Left colon (tissue), 2 donors: ENCODE measurements at regions of chr19 and their contacts with region 1.

Region 1: DNA sequence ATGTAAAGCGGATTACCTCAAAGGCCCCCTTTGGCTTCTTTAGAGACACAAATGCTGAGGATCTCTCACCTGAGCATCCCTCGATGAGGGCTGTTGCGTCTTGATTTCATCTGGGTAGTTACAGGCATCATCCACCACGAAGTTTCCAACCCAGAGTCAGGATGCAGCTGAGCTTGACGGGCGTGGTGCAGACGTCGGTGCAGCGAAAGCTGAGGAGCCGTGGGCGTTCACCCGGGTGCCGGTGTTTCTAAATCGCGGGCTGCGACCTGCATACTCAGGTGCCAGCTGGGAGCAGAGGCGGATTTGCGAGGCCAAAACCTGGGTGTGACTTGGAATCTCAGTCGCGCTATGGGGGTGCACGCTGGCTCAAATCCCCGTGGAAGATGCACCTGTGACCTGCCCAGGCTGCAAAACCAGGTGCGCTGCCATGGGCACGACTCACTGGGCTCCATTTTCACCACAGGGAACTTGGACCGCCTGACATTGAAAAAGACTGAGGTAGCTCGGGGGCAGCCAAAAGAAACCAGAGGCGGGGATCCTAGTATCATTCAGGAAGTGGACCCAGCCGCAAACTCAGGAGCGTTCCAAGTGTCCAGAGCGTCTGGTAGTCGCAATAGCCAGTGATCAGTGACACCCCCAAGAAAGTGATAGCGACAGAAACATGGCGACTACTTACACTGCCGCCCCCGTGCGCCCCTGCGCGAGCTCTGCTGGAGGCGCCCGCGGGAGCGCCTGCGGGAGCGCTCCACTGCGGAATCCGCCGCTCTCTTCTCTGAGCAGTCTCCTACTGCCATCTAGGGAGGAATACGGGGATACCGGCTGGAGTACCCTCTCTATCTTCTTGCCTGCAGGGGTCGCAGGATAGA is 36.4 kb upstream of the IGFL4 start:
- DNase-seq: peak; percentile 38 to 62
- ATAC-seq: peak; percentile 98

Region 2: DNA sequence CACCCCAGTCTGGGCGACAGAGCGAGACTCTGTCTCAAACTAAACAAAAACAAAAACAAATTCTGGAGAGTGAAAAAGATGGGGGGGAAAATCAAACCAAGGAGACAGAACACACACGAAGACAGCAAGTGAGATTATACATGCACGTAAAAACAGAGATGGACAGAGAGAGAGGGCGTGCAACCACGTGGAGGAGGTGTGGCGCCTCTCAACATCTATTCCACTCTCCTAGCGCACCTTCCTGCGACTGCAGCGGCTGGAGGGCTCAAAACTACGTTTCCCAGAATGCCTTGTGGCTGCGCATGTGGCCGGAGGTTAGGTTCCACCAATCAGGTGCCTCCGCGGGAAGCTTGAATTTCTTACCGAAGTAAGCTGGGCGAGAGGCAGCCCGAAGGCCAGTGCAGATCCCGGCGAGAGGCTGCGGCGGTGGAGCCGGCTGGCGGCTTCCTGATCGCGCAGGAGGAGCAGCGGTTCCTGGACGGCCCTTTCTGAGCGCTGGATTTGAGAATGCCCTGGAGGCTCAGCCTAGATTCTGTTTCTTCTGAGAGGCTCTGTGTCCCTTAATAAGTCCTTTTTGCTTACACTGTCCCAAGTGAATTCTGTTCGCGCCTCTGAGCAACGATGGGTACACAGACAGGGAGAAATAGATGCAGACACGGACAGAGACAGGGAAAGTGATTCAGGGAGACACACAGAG is 149.5 kb before region 1 on chr19:
- intact Hi-C with region 1: no loop called
- DNase-seq: peak; percentile 91 to 94
- ATAC-seq: peak; percentile 99

Region 3: GRCh38 chr19:46192992-46193650 is 115.9 kb after region 1 on chr19:
- intact Hi-C with region 1: loop called in 1 of 2 experiments (anchors 5 kb)
- DNase-seq: no peak
- ATAC-seq: peak; percentile 54

Region 4: GRCh38 chr19:46265217-46265828 is 188.1 kb after region 1 on chr19:
- intact Hi-C with region 1: loop called in 1 of 2 experiments (anchors 10 kb)
- DNase-seq: peak in 1 of 2 donors; percentile 54
- ATAC-seq: peak; percentile 73